Right ventricle myocardium inferior (tissue), 1 donor: ENCODE measurements at regions of chr3 and their contacts with region 1.

Region 1: GRCh38 chr3:52428151-52429005 is 16.5 kb downstream of the SEMA3G start:
- DNase-seq: no peak
- ATAC-seq: peak; percentile 81

Region 2: DNA sequence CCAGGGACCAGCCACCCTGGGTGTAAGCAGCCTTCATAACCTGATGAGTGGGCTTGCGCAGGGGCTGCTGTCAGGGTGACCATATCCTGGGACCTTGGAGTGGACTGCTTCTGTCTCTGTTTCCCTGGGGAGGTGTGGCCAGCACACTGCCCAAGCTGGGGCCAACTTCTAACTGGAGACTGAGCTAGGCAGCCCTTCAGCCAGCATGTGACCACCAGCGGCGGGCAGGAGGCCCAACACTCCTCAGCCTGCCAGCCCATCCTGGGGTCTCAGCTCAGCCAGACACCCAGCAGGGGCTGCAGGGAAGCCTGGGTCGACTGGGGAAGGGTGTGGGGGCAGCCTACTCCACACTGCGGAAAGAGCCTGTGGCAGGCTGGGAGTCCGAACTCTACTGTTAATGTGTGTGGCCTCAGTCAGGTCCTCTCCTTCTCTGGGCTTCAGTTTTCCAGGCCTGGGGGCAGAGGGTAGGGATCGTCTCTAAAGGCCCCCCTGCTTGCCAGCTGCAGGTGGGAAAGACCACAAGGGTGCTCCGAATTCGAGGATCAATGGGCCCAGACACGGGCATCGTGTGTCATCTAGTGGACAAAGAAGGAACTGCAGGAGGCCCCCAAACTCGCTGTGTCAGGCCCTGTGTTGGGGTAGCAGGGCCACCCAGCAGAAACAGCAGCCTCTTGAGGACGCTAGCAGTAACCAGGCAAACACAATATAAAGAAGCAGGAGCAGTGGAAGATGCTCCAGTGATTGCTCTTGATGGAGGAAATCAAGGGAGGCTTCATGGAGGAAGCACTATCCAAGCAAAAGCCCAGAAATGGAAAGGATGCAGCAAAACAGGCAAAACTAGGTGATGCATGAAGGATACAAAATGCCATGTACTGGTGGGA is 18.5 kb after region 1 on chr3:
- intact Hi-C with region 1: loop called (anchors 1 kb)
- DNase-seq: peak; percentile 86
- ATAC-seq: peak; percentile 19